Prostate gland (tissue), 2 donors: ENCODE measurements at regions of chr1 and their contacts with region 1.

Region 1: GRCh38 chr1:15028102-15028501 is 125.4 kb upstream of the TMEM51 start:
- DNase-seq: no peak
- H3K4me3 ChIP-seq: no peak overlapping the region
- H3K27ac ChIP-seq: no peak overlapping the region
- H3K4me1 ChIP-seq: no peaks in the 10 kb centered on the region
- H3K27me3 ChIP-seq: no peaks in the 10 kb centered on the region
- CTCF ChIP-seq: no peak
- POLR2A ChIP-seq: no peak

Region 2: DNA sequence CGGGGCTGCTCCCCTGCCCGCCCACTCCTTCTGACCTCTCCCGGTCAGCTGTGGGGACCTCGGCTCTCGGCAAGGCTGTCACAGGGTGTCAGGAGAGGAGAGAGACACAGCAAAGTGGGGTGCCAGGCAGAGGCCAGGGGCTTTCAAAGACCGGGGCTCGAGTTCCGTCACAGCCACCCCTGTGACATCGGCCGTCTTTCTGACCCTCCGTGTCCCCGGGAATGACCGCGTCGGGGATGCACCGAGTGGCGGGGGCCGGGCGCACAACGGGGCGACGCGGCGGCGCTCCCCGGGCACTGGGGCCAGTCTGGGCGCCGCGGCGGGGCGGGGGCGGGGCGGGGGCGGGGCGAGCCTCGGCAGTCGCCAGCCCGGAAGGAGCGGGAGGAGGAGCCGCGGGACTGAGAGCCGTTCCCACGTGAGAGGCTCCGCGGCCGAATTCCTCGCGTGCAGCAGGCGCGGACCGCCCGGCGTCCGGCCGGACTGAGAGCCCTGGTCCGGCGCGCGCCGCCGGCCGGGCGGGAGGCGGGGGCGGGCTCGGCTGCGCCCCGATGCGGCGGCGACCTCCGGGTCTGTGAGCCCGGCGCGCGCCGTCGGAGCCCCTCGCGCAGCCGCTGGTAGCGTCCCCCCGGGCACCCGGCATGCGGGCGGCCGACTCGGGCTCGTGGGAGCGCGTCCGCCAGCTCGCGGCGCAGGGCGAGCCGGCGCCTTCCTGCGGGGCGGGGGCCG is 104.2 kb before region 1 on chr1:
- intact Hi-C with region 1: loop called (anchors 2 kb)
- DNase-seq: peak; percentile 63
- H3K4me3 ChIP-seq: peak overlapping the region; percentile 47 to 60
- H3K27ac ChIP-seq: peak overlapping the region; percentile 18 to 53
- H3K4me1 ChIP-seq: no peaks in the 10 kb centered on the region
- H3K27me3 ChIP-seq: no peaks in the 10 kb centered on the region
- CTCF ChIP-seq: no peak
- POLR2A ChIP-seq: peak; percentile 18